MCF 10A (cell line): ENCODE measurements at regions of chr13 and their contacts with region 1.

Region 1: GRCh38 chr13:96020155-96020575 is 33.0 kb downstream of the UGGT2 start:
- DNase-seq: peak; percentile 70
- H3K4me3 Mint-ChIP-seq: no peak overlapping the region
- H3K27ac Mint-ChIP-seq: peak overlapping the region; percentile 32
- H3K4me1 Mint-ChIP-seq: no peaks in the 10 kb centered on the region
- H3K27me3 Mint-ChIP-seq: no peaks in the 10 kb centered on the region
- CTCF ChIP-seq: peak; percentile 89

Region 2: DNA sequence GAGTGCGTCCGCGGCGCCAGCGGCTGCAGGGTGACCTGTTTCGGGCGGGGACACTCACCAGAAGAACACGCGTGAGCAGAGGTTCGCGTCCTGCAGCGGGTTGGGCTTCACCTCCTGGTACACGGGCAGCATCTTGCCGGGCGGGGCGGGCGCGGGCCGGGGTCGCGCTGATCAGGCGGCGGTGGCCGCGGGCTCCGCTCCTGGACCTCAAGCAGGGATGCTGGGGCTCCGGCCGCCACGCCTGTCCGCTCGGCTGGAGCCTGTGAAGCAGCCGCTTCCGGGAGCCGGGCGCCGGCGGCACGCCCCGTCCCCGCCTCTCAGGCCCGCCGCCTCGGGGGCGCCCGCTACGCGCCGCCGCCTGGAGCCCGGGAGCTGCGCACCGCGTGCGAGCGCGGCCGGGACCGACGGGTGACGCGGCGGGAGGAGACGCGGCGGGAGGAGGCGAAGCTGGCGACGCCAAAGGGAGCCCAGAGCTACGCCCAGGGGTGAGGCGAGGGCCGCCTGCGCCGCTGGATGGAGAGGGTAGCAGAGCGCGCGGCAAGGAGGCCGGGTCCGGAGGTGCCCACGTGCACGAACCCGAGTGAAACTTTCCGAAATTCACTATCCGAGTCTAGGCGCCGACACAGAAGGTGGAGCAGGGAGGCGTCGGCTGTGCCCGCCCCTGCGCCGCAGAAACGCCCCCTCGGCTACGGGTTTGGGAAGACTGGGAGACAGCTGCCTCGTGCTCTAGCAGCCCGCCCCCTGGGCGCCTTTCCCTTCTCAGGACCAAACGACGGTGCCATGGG is 718.8 kb before region 1 on chr13 and contains the start of gene ABCC4:
- CTCF ChIA-PET with region 1: no interaction called
- POLR2A ChIA-PET with region 1: no interaction called
- intact Hi-C with region 1: no loop called
- DNase-seq: peak; percentile 66
- H3K4me3 Mint-ChIP-seq: peak within 1 kb of the TSS; percentile 75
- H3K27ac Mint-ChIP-seq: peak within 1 kb of the TSS; percentile 41
- H3K4me1 Mint-ChIP-seq: peaks cover 10% of the 10 kb centered on the region
- H3K27me3 Mint-ChIP-seq: no peaks in the 10 kb centered on the region
- CTCF ChIP-seq: no peak
- total RNA-seq, gene ABCC4: 13.8 and 13.9 TPM in 2 replicates

Region 3: DNA sequence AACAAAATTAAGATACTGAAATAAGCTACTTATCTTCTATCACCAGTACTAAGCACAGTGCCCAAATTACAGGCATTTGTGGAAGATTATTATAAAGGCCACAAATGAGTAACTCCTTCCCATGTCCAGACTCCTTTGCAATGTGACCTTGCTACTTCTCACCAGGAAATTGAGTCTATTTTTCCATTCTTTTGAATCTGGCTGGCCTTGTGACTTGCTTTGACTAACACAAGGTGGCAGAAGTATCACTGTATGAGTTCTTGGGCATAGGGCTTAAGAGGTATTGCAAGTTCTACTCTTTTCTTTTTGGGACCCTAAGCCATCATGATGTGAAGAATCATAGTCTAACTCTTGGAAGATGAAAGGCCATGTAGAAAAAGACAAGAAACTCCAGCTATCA is 16.9 kb before region 1 on chr13:
- CTCF ChIA-PET with region 1: interaction called, 18 read pairs
- POLR2A ChIA-PET with region 1: no interaction called
- intact Hi-C with region 1: no loop called
- DNase-seq: peak; percentile 27
- H3K4me3 Mint-ChIP-seq: no peak overlapping the region
- H3K27ac Mint-ChIP-seq: no peak overlapping the region
- H3K4me1 Mint-ChIP-seq: no peaks in the 10 kb centered on the region
- H3K27me3 Mint-ChIP-seq: no peaks in the 10 kb centered on the region
- CTCF ChIP-seq: no peak

Region 4: GRCh38 chr13:96075953-96076543 is 55.9 kb after region 1 on chr13:
- CTCF ChIA-PET with region 1: interaction called, 12 read pairs
- POLR2A ChIA-PET with region 1: no interaction called
- intact Hi-C with region 1: loop called (anchors 1 kb)
- DNase-seq: peak; percentile 43
- H3K4me3 Mint-ChIP-seq: no peak overlapping the region
- H3K27ac Mint-ChIP-seq: no peak overlapping the region
- H3K4me1 Mint-ChIP-seq: no peaks in the 10 kb centered on the region
- H3K27me3 Mint-ChIP-seq: peaks cover 27% of the 10 kb centered on the region
- CTCF ChIP-seq: peak; percentile 69

Region 5: DNA sequence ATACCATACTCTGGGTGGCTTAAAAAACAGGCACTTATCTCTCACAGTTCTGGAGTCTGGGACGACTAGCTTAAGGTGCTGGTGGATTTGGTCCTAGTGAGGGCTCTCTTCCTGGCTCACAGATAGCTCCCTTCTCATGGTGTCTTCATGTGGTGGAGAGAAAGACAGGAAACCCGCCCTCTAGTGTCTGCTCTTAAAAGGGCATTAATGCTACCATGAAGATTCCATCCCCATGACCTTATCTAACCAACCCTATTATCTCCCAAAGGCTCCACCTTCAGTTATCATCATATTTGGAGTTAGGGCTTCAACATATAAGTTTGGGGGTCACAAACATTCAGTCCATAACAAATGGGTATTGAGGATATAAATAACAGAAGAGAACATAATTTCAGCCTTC is 209.2 kb after region 1 on chr13:
- CTCF ChIA-PET with region 1: interaction called, 4 read pairs
- POLR2A ChIA-PET with region 1: no interaction called
- intact Hi-C with region 1: loop called (anchors 1 kb)
- DNase-seq: peak; percentile 60
- H3K4me3 Mint-ChIP-seq: no peak overlapping the region
- H3K27ac Mint-ChIP-seq: no peak overlapping the region
- H3K4me1 Mint-ChIP-seq: no peaks in the 10 kb centered on the region
- H3K27me3 Mint-ChIP-seq: no peaks in the 10 kb centered on the region
- CTCF ChIP-seq: peak; percentile 47

Region 6: DNA sequence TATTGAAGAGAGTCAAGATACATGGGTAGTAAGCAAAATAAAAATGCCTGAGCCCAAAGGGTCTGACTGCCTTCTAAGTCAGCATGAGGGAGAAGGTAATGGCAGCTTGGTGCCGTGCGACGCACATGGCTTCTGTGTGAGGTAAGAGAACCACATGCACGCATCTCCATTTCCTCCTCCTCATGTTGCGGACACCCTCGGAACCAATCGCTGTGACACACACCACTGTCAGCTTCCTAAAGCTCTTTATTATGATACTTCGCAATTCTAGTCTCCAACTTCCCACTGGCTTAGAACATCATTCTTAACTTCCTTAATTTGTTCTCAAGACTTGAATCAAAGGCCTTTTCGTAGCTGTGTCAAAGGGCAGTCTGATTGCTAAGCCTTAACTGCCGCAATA is 804.0 kb after region 1 on chr13:
- CTCF ChIA-PET with region 1: interaction called, 135 read pairs
- POLR2A ChIA-PET with region 1: no interaction called
- intact Hi-C with region 1: no loop called
- DNase-seq: no peak
- H3K4me3 Mint-ChIP-seq: no peak overlapping the region
- H3K27ac Mint-ChIP-seq: no peak overlapping the region
- H3K4me1 Mint-ChIP-seq: peaks cover 6% of the 10 kb centered on the region
- H3K27me3 Mint-ChIP-seq: no peaks in the 10 kb centered on the region
- CTCF ChIP-seq: no peak

Region 7: DNA sequence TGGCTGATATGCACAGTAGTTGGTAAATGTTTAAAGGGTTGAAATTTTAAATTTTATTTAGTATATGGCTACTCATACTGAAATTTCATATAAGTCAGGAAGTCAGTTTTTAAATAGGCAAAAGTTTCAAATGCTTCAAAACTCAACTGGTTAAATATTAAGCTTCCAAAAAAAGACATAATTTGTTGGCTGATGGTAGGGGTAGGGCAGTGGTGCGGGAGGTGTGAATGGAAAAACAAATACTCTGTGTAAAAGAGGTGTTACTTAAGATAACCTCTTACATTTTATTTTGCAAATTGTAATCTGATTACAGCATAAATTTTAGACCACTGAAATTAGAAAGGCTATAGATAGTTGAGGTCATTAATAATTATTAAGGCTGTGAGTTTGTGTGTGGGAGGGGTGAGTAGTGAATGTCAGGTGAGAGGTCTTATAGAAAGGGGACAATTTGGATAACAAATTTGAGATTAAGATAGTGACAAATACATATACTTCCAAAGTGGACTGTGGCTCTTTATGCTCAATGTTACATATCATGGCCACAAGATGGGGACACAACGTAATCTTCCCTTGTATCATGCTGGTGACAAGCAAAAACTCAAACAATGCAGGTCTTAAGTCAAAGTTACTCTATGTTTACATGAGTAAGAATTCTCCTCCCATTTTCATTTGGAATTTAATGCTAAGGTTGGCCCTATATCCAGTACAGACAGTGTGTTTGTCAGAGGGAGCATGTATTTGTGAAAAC is 1010.7 kb after region 1 on chr13:
- CTCF ChIA-PET with region 1: interaction called, 7 read pairs
- POLR2A ChIA-PET with region 1: no interaction called
- intact Hi-C with region 1: loop called (anchors 5 kb)
- DNase-seq: peak; percentile 51
- H3K4me3 Mint-ChIP-seq: no peak overlapping the region
- H3K27ac Mint-ChIP-seq: no peak overlapping the region
- H3K4me1 Mint-ChIP-seq: peaks cover 5% of the 10 kb centered on the region
- H3K27me3 Mint-ChIP-seq: no peaks in the 10 kb centered on the region
- CTCF ChIP-seq: peak; percentile 38